Mammary epithelial cell (primary cell): ENCODE measurements at regions of chr3 and their contacts with region 1.

Region 1: GRCh38 chr3:142958707-142959106 is 4.8 kb downstream of the PAQR9 start:
- DNase-seq: peak; percentile 98
- H3K4me3 ChIP-seq: no peak overlapping the region
- H3K27ac ChIP-seq: peak overlapping the region; percentile 27
- H3K4me1 ChIP-seq: peaks cover 19% of the 10 kb centered on the region
- H3K27me3 ChIP-seq: no peaks in the 10 kb centered on the region
- CTCF ChIP-seq: peak in 1 of 2 donors; percentile 34

Region 2: DNA sequence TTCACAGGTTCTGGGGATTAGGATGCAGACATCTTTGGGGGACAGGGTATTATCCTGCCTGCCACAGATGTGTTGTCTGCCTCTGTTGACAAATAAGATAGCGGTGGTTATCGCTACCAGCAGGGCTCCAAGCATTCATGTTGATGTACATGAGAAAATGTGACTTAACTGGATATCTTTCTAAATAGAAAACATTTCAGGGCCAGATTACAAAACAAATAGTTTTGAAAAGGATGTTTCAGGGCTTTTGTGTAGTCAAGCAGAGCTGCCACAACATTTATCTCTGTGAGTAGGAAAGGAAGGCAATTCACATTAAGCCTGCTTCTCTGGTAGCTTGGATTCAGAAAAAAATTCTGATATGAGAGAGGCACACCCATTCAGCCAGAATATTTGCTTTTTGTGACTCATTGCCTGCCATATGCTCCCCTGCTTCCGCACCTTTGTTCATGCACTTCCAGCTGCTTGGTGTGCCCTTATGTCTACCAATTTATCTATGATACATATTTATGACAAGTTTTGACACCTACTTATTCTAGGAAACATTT is 339.7 kb before region 1 on chr3:
- CTCF ChIA-PET with region 1: no interaction called
- dilution Hi-C with region 1: no loop called
- in situ Hi-C with region 1: no loop called
- intact Hi-C with region 1: no loop called
- DNase-seq: peak; percentile 35
- H3K4me3 ChIP-seq: no peak overlapping the region
- H3K27ac ChIP-seq: no peak overlapping the region
- H3K4me1 ChIP-seq: peaks cover 10% of the 10 kb centered on the region
- H3K27me3 ChIP-seq: no peaks in the 10 kb centered on the region
- CTCF ChIP-seq: no peak

Region 3: GRCh38 chr3:142976621-142977398 is 18.1 kb after region 1 on chr3:
- CTCF ChIA-PET with region 1: no interaction called
- dilution Hi-C with region 1: no loop called
- in situ Hi-C with region 1: no loop called
- intact Hi-C with region 1: loop called (anchors 2 kb)
- DNase-seq: peak; percentile 89
- H3K4me3 ChIP-seq: no peak overlapping the region
- H3K27ac ChIP-seq: peak overlapping the region; percentile 1
- H3K4me1 ChIP-seq: peaks cover 14% of the 10 kb centered on the region
- H3K27me3 ChIP-seq: no peaks in the 10 kb centered on the region
- CTCF ChIP-seq: no peak

Region 4: DNA sequence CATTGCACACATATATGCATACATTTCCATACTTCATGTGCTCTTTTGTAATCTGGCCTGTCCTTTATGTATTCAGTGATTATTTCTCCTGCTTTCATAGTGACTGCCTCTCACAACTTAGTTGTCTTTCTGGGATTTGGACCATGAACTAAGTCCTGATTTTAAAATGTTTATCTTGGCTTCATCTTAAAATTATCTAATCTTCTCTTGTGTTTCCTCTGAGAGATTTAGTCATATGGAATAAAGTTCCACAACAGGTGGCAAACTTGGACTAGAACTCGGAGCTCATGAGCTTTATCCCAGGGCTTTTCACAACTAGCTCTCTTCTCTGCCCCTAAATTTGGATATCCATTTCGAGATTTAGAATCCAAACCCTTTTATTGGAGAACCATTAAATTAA is 86.9 kb after region 1 on chr3:
- CTCF ChIA-PET with region 1: no interaction called
- dilution Hi-C with region 1: no loop called
- in situ Hi-C with region 1: no loop called
- intact Hi-C with region 1: no loop called
- DNase-seq: no peak
- H3K4me3 ChIP-seq: no peak overlapping the region
- H3K27ac ChIP-seq: no peak overlapping the region
- H3K4me1 ChIP-seq: no peaks in the 10 kb centered on the region
- H3K27me3 ChIP-seq: no peaks in the 10 kb centered on the region
- CTCF ChIP-seq: no peak

Region 5: GRCh38 chr3:143433787-143434378 is 475.2 kb after region 1 on chr3:
- CTCF ChIA-PET with region 1: no interaction called
- dilution Hi-C with region 1: no loop called
- in situ Hi-C with region 1: no loop called
- intact Hi-C with region 1: no loop called
- DNase-seq: no peak
- H3K4me3 ChIP-seq: no peak overlapping the region
- H3K27ac ChIP-seq: no peak overlapping the region
- H3K4me1 ChIP-seq: no peaks in the 10 kb centered on the region
- H3K27me3 ChIP-seq: no peaks in the 10 kb centered on the region
- CTCF ChIP-seq: peak; percentile 59 to 61